H1 (cell line): ENCODE measurements at regions of chr13 and their contacts with region 1.

Region 1: GRCh38 chr13:95671597-95671996 is 5.3 kb upstream of the DNAJC3 start:
- DNase-seq: no peak
- H3K4me3 ChIP-seq: no peak overlapping the region
- H3K27ac ChIP-seq: no peak overlapping the region
- H3K4me1 ChIP-seq: no peaks in the 10 kb centered on the region
- H3K27me3 ChIP-seq: no peaks in the 10 kb centered on the region
- CTCF ChIP-seq: no peak
- EP300 ChIP-seq: no peak
- POLR2A ChIP-seq: no peak
- RAD21 ChIP-seq: no peak

Region 2: GRCh38 chr13:95540888-95541287 is 130.7 kb before region 1 on chr13:
- CTCF ChIA-PET with region 1: no interaction called
- POLR2A ChIA-PET with region 1: no interaction called
- DNase-seq: no peak
- H3K4me3 ChIP-seq: no peak overlapping the region
- H3K27ac ChIP-seq: no peak overlapping the region
- H3K4me1 ChIP-seq: peaks cover 0 to 2% (median 0%) of the 10 kb centered on the region in 4 experiments; a peak in 2 of 7 replicates
- H3K27me3 ChIP-seq: no peaks in the 10 kb centered on the region
- CTCF ChIP-seq: no peak
- EP300 ChIP-seq: no peak
- POLR2A ChIP-seq: no peak
- RAD21 ChIP-seq: no peak

Region 3: DNA sequence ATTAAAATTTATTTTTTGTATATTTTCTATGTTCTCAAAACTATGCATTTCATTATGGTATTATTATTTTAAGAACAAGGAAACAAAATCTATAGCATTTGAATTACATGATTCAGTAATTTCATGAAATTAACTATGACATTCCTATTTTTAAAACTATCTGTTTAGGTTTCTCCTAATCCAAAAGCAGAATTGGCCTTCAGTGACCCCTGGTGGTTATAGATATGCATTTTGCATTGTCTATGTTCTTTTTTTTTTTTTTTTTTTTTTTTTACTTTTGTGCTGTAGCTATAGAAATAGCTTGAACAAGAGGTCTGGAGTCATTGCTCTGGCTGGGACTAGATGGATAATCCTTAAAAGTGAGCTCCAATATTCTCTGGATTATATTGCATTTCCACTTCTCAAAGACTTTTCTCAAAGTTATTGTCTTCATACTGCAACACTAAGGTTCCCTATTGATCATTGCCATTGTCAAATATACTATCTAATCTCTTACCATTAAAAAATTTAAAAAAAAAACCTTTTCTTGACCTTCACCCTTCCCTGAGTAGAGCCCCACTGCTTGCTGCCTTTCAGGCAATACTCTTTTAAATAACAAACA is 10.5 kb before region 1 on chr13:
- CTCF ChIA-PET with region 1: interaction called, 10 read pairs
- POLR2A ChIA-PET with region 1: interaction called, 3 read pairs
- DNase-seq: no peak
- H3K4me3 ChIP-seq: no peak overlapping the region
- H3K27ac ChIP-seq: no peak overlapping the region
- H3K4me1 ChIP-seq: no peaks in the 10 kb centered on the region
- H3K27me3 ChIP-seq: no peaks in the 10 kb centered on the region; a peak in 1 of 7 replicates
- CTCF ChIP-seq: peak in 1 of 3 experiments; percentile 31; a peak in 1 of 4 replicates
- EP300 ChIP-seq: no peak
- POLR2A ChIP-seq: no peak
- RAD21 ChIP-seq: peak in 1 of 2 experiments; percentile 64; a peak in 3 of 4 replicates